Colonic mucosa (tissue), 4 donors: ENCODE measurements at regions of chr4 and their contacts with region 1.

Region 1: DNA sequence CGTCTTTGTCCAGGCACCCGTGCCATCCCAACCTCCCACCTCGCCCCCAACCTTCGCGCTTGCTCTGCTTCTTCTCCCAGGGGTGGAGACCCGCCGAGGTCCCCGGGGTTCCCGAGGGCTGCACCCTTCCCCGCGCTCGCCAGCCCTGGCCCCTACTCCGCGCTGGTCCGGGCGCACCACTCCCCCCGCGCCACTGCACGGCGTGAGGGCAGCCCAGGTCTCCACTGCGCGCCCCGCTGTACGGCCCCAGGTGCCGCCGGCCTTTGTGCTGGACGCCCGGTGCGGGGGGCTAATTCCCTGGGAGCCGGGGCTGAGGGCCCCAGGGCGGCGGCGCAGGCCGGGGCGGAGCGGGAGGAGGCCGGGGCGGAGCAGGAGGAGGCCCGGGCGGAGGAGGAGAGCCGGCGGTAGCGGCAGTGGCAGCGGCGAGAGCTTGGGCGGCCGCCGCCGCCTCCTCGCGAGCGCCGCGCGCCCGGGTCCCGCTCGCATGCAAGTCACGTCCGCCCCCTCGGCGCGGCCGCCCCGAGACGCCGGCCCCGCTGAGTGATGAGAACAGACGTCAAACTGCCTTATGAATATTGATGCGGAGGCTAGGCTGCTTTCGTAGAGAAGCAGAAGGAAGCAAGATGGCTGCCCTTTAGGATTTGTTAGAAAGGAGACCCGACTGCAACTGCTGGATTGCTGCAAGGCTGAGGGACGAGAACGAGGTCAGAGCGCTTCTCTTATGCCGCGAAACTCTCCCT is at the start of gene TET2:
- DNase-seq: peak; percentile 83
- H3K4me3 ChIP-seq: peak within 1 kb of the TSS; percentile 72
- H3K27ac ChIP-seq: peak within 1 kb of the TSS; percentile 76
- H3K4me1 ChIP-seq: no peaks in the 10 kb centered on the region
- H3K27me3 ChIP-seq: no peaks in the 10 kb centered on the region
- CTCF ChIP-seq: no peak
- total RNA-seq, gene TET2: 20.0 to 30.1 TPM

Region 2: GRCh38 chr4:104879367-104879766 is 267.1 kb before region 1 on chr4:
- intact Hi-C with region 1: no loop called
- DNase-seq: no peak
- H3K4me3 ChIP-seq: no peak overlapping the region
- H3K27ac ChIP-seq: no peak overlapping the region
- H3K4me1 ChIP-seq: no peaks in the 10 kb centered on the region
- H3K27me3 ChIP-seq: no peaks in the 10 kb centered on the region
- CTCF ChIP-seq: no peak

Region 3: DNA sequence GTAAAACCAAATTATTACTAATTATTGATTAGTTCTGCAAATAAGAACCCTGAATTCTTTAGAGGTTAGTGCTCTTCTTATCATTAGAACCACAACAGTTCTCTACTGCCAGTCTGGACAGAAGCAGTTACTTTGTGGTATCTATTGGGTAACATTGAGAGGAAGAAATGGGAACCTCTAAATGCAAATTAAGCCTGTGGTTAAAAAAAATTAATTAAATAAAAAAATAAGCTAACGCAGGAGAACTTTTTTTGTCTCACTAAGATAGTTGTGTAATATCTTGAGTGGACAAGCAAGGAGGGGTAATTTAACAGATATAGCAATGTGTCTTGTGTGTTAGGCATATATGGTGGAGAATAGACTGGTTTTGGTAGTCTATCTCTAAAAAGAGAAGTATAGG is 32.6 kb before region 1 on chr4:
- intact Hi-C with region 1: no loop called
- DNase-seq: no peak
- H3K4me3 ChIP-seq: no peak overlapping the region
- H3K27ac ChIP-seq: no peak overlapping the region
- H3K4me1 ChIP-seq: no peaks in the 10 kb centered on the region
- H3K27me3 ChIP-seq: no peaks in the 10 kb centered on the region
- CTCF ChIP-seq: no peak

Region 4: DNA sequence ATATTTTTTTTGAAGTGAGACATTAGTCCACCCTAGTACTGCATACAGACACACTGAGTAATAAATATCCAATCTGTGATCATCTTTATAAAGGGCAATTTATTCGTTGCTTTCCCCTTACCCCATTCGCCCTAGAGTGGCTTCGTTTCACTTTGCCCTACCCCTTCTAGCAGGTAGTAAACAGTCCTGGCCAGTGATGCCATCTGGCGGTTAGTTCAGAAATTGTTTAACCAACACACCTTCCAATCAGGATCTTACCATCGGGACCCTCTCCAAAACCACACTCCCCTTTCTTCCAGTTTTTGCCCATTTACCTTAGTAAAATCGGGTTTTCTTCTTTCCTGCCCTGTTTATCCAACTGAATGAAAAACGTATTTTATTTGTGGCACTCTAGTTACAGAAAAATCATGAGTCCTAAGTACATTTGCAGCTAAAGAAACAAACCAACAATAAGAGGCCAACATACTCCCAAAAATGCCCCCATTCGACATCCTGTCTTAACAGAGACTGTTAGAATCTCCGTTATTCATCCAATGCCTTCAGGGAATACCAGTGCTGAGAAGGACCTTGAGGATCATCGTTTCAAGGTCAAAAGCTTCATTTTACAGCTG is 325.2 kb after region 1 on chr4:
- intact Hi-C with region 1: loop called (anchors 2 kb)
- DNase-seq: peak; percentile 86
- H3K4me3 ChIP-seq: peak overlapping the region; percentile 97
- H3K27ac ChIP-seq: peak overlapping the region; percentile 99
- H3K4me1 ChIP-seq: peaks cover 14% of the 10 kb centered on the region
- H3K27me3 ChIP-seq: no peaks in the 10 kb centered on the region
- CTCF ChIP-seq: peak; percentile 59

Region 5: DNA sequence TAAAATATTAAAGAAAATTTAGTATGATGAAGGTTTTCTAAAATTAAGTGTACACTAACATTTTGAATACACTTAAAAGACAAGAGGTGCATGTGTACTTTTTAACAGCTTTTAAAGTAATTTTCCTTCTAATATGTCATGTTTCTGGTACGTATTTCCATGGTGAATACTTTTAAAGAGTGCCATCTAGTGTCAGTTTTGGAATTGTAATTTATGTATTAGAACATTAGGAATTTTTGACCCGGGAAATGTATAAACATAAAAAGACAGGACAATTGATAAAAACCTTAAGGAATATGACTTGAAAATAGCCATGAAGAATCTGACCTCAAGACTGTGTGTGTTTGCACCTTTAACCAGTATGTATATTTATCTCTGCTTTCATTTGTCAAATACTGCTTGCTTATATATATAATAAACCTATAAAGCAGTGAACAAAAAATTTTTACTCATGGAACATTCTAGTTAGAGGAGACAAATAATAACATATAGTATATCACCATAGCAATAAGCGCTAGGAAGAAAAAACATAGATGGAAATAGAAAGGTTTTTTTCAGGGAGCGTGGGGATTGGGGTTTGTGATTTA is 569.3 kb after region 1 on chr4:
- intact Hi-C with region 1: loop called (anchors 10 kb)
- DNase-seq: no peak
- H3K4me3 ChIP-seq: no peak overlapping the region
- H3K27ac ChIP-seq: no peak overlapping the region
- H3K4me1 ChIP-seq: no peaks in the 10 kb centered on the region
- H3K27me3 ChIP-seq: no peaks in the 10 kb centered on the region
- CTCF ChIP-seq: peak; percentile 38